Endothelial cell of umbilical vein (primary cell): ENCODE measurements at regions of chrX and their contacts with region 1.

Region 1: DNA sequence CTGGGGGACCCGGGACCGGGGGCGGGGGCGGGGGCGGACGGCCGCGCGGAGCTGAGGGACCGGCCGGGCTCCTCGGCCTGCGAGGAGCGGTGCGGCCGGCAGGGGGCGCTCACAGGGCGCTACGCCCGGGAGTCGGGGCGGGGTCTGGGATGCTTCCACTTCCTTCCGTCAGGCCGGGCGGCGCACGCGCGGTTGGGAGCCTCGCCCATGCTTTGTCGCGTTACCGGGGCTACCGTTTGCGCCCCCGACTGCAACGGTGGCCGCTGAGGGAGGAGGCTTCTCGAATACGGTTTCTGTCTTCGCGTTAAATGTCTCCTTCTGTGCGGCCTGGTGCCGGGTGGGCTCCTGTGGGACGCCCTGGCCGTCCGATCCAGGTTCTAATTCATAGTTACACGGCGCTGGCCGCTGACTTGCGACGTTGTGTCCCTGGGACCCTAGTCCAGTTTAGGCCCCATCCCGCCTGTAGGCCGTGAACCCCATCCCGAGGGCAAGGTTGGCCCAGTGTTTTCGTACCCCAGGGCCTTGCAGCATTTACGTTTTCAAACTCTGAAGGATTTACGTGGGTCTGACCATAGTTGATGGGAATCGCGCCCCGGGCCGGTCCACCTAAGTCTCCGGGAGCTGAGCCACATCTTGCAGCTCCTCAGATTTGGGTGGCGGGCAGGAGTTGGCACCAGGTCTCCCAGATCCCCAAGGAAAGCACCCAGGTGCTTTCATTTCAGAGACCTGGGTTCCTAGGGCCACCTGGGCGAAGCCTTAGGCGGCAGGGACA is 549 bp downstream of the MSL3 start:
- DNase-seq: peak; percentile 78
- H3K4me3 ChIP-seq: peak overlapping the region; percentile 34 to 90 (median 90)
- H3K27ac ChIP-seq: peak overlapping the region; percentile 79
- H3K4me1 ChIP-seq: peaks cover 10% of the 10 kb centered on the region
- H3K27me3 ChIP-seq: peaks cover 0 to 4% of the 10 kb centered on the region in 2 experiments
- CTCF ChIP-seq: peak; percentile 34 to 73
- POLR2A ChIP-seq: no peak

Region 2: GRCh38 chrX:10979956-10980355 is 778.6 kb before region 1 on chrX:
- CTCF ChIA-PET with region 1: no interaction called
- POLR2A ChIA-PET with region 1: no interaction called
- dilution Hi-C with region 1: no loop called
- intact Hi-C with region 1: no loop called
- DNase-seq: no peak
- H3K4me3 ChIP-seq: no peak overlapping the region
- H3K27ac ChIP-seq: no peak overlapping the region
- H3K4me1 ChIP-seq: no peaks in the 10 kb centered on the region
- H3K27me3 ChIP-seq: no peaks in the 10 kb centered on the region
- CTCF ChIP-seq: no peak
- POLR2A ChIP-seq: no peak

Region 3: GRCh38 chrX:11111038-11111851 is 647.3 kb before region 1 on chrX and contains the start of gene HCCS:
- CTCF ChIA-PET with region 1: no interaction called
- POLR2A ChIA-PET with region 1: no interaction called
- dilution Hi-C with region 1: no loop called
- intact Hi-C with region 1: loop called (anchors 1 kb)
- DNase-seq: peak; percentile 86
- H3K4me3 ChIP-seq: peak within 1 kb of the TSS; percentile 32 to 97 (median 78)
- H3K27ac ChIP-seq: peak within 1 kb of the TSS; percentile 76
- H3K4me1 ChIP-seq: peaks cover 27% of the 10 kb centered on the region
- H3K27me3 ChIP-seq: no peaks in the 10 kb centered on the region
- CTCF ChIP-seq: no peak
- POLR2A ChIP-seq: no peak
- total RNA-seq, gene HCCS: 35.2 and 39.3 TPM in 2 replicates

Region 4: DNA sequence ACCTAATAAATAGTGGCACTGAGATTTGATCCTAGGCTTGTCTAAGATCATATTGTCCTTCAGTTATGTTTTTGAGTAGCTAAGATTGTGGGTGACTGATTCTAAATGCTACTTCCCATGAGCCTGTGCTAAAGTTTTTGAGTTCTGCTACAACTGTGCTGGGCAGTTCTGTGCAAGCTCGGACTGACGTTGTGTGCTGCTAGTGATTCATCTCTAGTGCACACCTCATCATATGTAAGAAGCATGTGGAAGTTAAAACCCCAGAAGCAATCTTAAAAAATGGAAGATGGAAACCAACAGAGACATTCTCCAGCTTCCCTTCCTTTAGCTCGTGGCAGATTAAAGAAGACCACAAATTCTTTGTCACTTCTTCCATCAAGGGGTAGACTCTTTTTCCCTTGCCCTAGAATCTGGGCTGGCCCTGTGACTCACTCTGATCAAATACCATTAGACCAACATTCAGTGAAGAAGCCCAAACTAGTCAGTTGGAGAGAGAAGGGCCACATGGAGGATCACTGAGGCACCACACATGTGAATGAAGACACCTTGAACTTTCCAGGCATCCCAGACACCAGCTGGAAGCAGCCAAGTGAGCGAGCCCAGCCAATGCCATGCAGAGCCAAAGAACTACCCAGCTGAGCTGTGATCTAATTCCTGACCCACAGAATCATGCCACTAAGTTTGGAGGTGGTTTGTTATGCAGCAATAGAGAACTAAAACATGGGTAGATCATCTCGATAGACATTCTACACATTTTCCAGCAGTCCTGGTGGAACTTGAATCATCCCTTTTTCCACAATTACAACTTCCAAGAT is 109.7 kb before region 1 on chrX:
- CTCF ChIA-PET with region 1: no interaction called
- POLR2A ChIA-PET with region 1: no interaction called
- dilution Hi-C with region 1: no loop called
- intact Hi-C with region 1: no loop called
- DNase-seq: no peak
- H3K4me3 ChIP-seq: no peak overlapping the region
- H3K27ac ChIP-seq: no peak overlapping the region
- H3K4me1 ChIP-seq: no peaks in the 10 kb centered on the region
- H3K27me3 ChIP-seq: no peaks in the 10 kb centered on the region
- CTCF ChIP-seq: no peak
- POLR2A ChIP-seq: no peak

Region 5: DNA sequence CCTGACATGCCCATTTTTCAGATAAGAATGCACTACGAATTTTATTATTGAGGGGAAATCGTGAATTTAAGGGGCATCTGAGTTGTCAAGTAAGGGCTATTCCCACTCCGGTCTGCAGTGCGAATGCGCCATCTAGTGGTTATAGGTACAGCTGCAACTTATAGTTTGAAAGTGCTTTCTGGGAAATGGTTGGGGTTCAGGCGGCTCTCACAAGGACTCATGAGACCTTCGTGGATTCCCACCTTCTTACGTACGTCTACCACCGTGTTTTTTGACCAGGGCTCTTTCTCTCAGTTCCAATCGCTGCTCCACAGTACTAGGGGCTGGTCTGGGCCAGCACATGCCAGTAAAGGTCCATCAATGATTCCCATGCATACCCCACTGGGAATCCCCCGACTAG is 11.7 kb after region 1 on chrX:
- CTCF ChIA-PET with region 1: interaction called, 6 read pairs
- POLR2A ChIA-PET with region 1: no interaction called
- dilution Hi-C with region 1: no loop called
- intact Hi-C with region 1: loop called (anchors 1 kb)
- DNase-seq: peak; percentile 51
- H3K4me3 ChIP-seq: no peak overlapping the region
- H3K27ac ChIP-seq: no peak overlapping the region
- H3K4me1 ChIP-seq: no peaks in the 10 kb centered on the region
- H3K27me3 ChIP-seq: no peaks in the 10 kb centered on the region
- CTCF ChIP-seq: peak; percentile 70 to 72
- POLR2A ChIP-seq: no peak

Region 6: DNA sequence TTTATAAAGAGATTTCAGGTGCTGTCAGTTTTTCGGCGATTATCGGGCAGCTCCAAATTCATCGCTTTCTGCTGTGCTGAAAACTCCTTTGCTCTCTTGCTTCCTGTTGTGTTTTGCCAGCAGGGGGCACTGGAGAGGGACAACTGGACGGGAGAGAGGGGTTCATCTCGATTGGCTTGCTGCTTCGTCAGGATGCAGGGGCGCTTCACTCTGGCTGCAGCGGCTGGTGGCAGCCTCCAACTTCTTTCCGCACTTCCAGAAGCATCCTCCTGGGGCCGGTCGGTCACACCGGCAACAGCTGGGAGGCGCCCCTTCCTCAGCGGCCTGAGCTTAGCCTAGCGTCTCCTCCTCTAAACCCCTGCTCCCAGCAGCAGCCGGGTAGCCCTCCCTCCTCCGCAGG is 29.0 kb after region 1 on chrX:
- CTCF ChIA-PET with region 1: interaction called, 11 read pairs
- POLR2A ChIA-PET with region 1: no interaction called
- dilution Hi-C with region 1: no loop called
- intact Hi-C with region 1: no loop called
- DNase-seq: peak; percentile 49
- H3K4me3 ChIP-seq: no peak overlapping the region
- H3K27ac ChIP-seq: no peak overlapping the region
- H3K4me1 ChIP-seq: no peaks in the 10 kb centered on the region
- H3K27me3 ChIP-seq: no peaks in the 10 kb centered on the region
- CTCF ChIP-seq: peak; percentile 56 to 62
- POLR2A ChIP-seq: no peak